ENCODE measurements at regions of chr1 and their contacts with region 1.

Region 1: DNA sequence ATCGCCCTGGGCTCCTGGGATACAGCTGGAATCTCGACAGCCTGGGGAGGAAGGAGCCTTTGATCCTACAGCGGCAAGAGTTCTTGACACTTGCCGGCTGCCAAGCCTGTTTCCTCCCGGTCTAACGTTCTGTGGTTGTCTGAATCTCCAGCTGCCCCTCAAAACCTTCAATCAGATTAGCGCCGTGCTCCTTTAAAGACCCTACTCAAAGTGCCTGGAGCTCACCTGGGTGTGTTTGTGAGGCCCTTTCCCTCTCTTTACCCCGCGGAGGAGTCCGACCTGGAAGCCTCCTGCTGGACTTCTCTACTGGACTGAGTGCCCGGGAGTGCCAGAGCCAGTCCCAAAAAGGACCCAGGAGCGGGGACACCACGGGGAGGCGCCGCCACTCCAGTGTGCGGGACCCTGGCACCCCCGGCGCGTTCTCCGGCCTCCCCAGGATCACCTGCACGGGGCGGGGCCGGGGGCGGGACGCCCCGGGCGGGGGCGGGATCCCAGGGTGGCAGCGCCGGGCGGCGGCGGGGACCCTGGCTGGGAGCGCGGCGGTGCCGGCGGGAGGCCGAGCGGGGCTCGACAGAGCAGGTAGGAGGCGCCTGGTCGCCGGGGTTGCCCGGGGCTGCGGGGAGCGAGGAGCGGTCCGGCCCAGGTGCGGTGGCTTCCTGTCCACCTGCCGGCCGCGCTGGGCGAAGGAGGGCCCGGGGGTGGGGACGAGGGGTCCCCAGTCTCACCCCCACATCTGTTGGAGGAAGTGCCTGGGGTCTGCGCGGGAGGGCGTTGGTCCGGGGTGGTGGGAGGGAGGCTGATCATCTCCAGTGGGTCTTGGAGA is at the start of gene NCMAP:
- DNase-seq: peak; percentile 43
- ATAC-seq: peak; percentile 84
- H3K4me3 Mint-ChIP-seq: peak within 1 kb of the TSS; percentile 64
- H3K27ac Mint-ChIP-seq: no peak within 1 kb of the TSS
- H3K4me1 Mint-ChIP-seq: peaks cover 12% of the 10 kb centered on the region
- H3K27me3 Mint-ChIP-seq: peaks cover 16% of the 10 kb centered on the region
- CTCF ChIP-seq: no peak
- total RNA-seq, gene NCMAP: not detected in 2 replicates

Region 2: DNA sequence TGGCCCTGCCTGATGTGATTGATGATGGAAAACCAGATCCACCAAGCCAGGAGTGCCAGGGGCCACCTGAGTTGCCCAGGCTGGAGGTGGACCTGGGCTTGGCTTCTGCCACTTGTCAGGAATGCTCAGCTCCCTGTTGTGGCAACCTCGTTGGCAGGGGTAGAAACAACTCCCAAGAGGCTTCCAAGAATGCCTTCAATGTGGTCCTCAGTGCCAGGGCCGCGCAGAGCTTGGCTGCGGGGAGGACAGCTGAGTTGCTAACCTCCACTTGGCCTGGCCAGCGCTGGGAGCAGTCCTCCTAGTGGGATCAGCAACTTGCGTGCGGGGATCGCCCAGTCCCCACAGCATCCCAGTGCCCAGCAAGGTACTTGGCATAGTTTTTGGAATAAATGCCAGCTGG is 452.8 kb before region 1 on chr1:
- CTCF ChIA-PET with region 1: no interaction called
- POLR2A ChIA-PET with region 1: no interaction called
- intact Hi-C with region 1: no loop called
- DNase-seq: no peak
- ATAC-seq: no peak
- H3K4me3 Mint-ChIP-seq: no peak overlapping the region
- H3K27ac Mint-ChIP-seq: no peak overlapping the region
- H3K4me1 Mint-ChIP-seq: no peaks in the 10 kb centered on the region
- H3K27me3 Mint-ChIP-seq: peaks cover 3% of the 10 kb centered on the region
- CTCF ChIP-seq: no peak

Region 3: DNA sequence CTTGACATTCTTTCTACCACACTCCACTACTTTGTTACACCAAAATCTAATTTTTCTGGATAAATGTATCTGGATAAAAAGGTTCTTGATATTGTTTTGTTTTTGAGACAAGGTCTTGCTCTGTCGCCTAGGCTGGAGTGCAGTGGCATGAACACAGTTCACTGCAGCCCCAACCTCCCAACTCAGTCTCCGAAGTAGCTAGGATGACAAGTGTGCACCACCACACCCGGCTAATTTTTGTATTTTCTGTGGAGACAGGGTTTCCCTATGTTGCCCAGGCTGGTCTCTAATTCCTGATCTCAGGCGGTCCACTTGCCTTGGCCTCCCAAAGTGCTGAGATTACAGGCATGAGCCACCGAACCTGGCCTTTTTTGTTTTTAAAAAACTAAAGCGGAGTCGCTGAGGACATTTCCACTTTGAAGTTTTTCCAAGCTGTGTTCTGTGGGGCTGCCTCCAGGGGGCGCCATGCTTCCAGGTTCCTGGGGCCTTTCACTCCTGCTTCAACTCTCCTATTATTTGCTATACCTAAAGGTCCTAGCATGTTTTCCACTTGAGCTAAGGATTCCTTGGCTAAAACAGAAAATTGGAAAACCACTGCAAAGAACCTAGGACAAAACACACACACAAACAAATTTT is 14.0 kb before region 1 on chr1:
- CTCF ChIA-PET with region 1: no interaction called
- POLR2A ChIA-PET with region 1: no interaction called
- intact Hi-C with region 1: loop called (anchors 2 kb)
- DNase-seq: no peak
- ATAC-seq: no peak
- H3K4me3 Mint-ChIP-seq: no peak overlapping the region
- H3K27ac Mint-ChIP-seq: peak overlapping the region; percentile 30
- H3K4me1 Mint-ChIP-seq: peaks cover 42% of the 10 kb centered on the region
- H3K27me3 Mint-ChIP-seq: no peaks in the 10 kb centered on the region
- CTCF ChIP-seq: no peak